ENCODE measurements at regions of chr10 and their contacts with region 1.

Region 1: DNA sequence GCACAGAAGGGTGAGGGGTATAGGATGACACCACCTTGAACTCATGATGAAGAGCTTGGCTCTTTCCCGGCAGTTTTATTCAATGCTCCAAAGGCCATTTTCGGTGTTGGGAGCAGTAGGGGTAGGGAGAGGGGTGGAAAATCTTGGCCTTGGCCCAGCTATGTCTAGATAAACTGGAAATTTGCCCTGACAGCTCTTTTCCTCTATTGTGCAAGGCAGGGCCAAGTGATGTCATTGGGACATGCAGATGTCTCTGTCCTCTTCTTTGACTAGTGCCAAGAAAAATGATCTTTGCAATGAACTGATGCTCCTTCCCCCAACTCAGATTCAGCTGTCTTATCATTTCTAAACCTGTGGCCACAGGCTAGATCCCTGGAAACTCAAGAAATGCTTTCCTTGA is 27.7 kb upstream of the PRKCQ start:
- DNase-seq: no peak
- H3K4me3 Mint-ChIP-seq: no peak overlapping the region
- H3K27ac Mint-ChIP-seq: peak overlapping the region; percentile 69
- H3K4me1 Mint-ChIP-seq: peaks cover 91% of the 10 kb centered on the region
- H3K27me3 Mint-ChIP-seq: no peaks in the 10 kb centered on the region

Region 2: DNA sequence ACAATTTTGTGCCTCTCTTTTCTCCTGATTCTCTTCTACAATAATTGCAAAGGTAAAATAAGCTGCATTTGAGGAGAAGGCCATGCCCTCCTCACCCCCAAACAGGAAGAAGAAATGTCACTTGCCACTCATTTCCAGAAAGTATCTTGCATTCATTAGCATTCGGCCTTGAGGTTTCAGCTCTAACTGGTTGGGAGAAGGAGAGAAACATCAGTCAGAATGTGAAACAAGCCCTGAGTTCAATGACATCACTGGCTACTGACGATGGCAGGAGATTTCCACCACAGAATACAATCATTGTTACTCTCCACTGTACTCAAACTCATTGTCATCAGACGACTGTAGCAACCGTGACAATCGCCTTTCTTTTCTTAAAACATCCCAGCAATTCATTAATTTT is 100.5 kb before region 1 on chr10:
- intact Hi-C with region 1: no loop called
- DNase-seq: peak; percentile 57
- H3K4me3 Mint-ChIP-seq: peak overlapping the region; percentile 60
- H3K27ac Mint-ChIP-seq: peak overlapping the region; percentile 88
- H3K4me1 Mint-ChIP-seq: peaks cover 73% of the 10 kb centered on the region
- H3K27me3 Mint-ChIP-seq: no peaks in the 10 kb centered on the region

Region 3: DNA sequence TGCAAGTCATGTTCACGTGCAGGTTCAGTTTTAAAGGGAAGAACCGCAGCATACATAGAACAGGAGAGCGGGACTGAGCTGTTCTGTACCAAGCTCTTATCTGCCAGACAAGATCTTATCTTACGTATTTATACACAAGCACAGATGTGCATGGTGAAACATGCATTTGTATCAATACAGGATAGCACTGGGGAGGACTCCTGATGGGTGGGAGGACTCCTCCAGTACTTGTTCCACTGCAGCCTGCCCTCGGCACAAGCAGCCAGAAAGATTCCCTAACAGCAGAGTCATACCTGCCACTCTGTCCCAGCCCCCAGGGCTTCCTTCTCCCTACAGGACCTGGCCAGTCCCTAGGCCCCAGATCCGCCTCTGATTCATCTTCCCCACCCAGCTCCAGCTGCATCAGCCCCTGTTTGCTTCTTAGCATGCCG is 14.5 kb before region 1 on chr10:
- intact Hi-C with region 1: loop called (anchors 1 kb)
- DNase-seq: no peak
- H3K4me3 Mint-ChIP-seq: peak overlapping the region; percentile 34
- H3K27ac Mint-ChIP-seq: peak overlapping the region; percentile 93
- H3K4me1 Mint-ChIP-seq: peaks cover 95% of the 10 kb centered on the region
- H3K27me3 Mint-ChIP-seq: no peaks in the 10 kb centered on the region

Region 4: GRCh38 chr10:6647811-6648526 is 40.2 kb after region 1 on chr10:
- intact Hi-C with region 1: loop called (anchors 1 kb)
- DNase-seq: peak; percentile 58
- H3K4me3 Mint-ChIP-seq: no peak overlapping the region
- H3K27ac Mint-ChIP-seq: no peak overlapping the region
- H3K4me1 Mint-ChIP-seq: peaks cover 51% of the 10 kb centered on the region
- H3K27me3 Mint-ChIP-seq: no peaks in the 10 kb centered on the region

Region 5: DNA sequence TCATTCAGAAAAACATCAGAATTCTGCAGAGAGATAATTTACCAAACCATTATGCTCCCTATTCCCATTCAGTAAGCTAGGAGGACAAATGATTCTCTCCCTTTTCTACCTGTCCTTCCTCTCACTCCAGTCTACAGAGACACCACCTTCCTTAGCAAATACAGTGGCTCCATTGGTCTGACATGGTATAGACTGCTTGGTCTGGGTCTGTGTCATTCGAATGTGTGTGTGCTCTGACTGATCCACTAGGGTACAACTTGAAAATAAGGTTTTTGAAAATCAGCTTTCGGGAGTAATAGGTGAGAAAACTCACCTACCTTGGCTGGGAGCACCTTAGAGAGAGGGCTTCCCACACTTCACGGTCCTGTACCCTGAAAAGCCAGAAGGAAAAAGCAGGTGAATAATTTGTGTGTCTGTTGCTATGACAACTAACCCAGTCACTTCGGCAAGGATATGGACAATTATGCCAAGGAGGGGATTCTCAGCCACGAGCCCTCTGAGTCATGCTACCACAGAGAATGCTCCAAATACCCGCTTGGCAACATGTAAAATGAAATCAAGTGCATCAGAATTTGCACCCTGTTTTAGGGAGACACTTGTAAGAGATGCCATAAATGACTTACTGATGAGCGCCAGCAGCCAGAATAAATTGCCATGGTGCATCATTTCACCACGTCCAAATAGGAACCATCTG is 86.8 kb after region 1 on chr10:
- intact Hi-C with region 1: no loop called
- DNase-seq: no peak
- H3K4me3 Mint-ChIP-seq: no peak overlapping the region
- H3K27ac Mint-ChIP-seq: no peak overlapping the region
- H3K4me1 Mint-ChIP-seq: peaks cover 8% of the 10 kb centered on the region
- H3K27me3 Mint-ChIP-seq: peaks cover 10% of the 10 kb centered on the region